ENCODE measurements at regions of chr1 and their contacts with region 1.

Region 1: GRCh38 chr1:226083302-226084101 is 21.0 kb downstream of the H3-3A start:
- DNase-seq: peak; percentile 97
- H3K4me3 Mint-ChIP-seq: peak overlapping the region; percentile 81
- H3K27ac Mint-ChIP-seq: peak overlapping the region; percentile 58
- H3K4me1 Mint-ChIP-seq: peaks cover 6% of the 10 kb centered on the region
- H3K27me3 Mint-ChIP-seq: no peaks in the 10 kb centered on the region
- CTCF ChIP-seq: no peak

Region 2: DNA sequence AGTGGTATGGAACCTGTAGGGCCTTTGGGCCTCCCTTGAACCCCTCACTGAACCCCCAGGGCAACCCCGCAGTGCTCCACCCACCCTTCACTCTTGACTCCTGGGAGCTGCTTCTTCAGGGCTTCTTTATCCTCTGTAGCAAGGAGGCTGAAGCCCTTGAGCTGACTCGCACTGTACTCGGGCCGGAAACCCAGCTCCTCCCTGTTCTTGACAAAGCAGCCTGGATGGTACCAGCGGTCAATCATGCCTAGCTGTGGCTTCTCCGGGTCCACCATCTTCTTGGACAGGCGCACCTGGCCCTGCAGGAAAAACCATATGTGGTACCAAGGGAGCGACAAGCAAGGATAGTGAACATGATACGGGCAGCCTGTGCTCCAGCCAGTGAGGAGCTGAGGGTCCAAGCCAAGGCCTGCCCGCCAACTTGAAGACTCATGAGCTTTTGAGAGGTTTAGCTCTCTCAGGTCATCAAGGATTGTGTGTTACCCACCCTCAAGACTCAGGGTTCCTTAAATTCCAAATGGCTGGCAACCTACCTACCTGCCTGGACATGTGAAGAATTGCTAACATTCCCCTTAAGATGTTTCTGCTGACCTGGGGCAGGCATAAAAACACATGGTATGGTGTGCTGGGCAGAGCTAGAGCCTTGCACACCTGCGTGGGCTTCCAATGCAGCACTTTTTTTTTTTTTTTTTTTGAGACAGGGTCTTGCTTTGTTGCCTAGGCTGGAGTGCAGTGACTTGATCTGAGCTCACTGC is 307.0 kb after region 1 on chr1:
- CTCF ChIA-PET with region 1: no interaction called
- intact Hi-C with region 1: no loop called
- DNase-seq: no peak
- H3K4me3 Mint-ChIP-seq: no peak overlapping the region
- H3K27ac Mint-ChIP-seq: no peak overlapping the region
- H3K4me1 Mint-ChIP-seq: no peaks in the 10 kb centered on the region
- H3K27me3 Mint-ChIP-seq: no peaks in the 10 kb centered on the region
- CTCF ChIP-seq: no peak

Region 3: DNA sequence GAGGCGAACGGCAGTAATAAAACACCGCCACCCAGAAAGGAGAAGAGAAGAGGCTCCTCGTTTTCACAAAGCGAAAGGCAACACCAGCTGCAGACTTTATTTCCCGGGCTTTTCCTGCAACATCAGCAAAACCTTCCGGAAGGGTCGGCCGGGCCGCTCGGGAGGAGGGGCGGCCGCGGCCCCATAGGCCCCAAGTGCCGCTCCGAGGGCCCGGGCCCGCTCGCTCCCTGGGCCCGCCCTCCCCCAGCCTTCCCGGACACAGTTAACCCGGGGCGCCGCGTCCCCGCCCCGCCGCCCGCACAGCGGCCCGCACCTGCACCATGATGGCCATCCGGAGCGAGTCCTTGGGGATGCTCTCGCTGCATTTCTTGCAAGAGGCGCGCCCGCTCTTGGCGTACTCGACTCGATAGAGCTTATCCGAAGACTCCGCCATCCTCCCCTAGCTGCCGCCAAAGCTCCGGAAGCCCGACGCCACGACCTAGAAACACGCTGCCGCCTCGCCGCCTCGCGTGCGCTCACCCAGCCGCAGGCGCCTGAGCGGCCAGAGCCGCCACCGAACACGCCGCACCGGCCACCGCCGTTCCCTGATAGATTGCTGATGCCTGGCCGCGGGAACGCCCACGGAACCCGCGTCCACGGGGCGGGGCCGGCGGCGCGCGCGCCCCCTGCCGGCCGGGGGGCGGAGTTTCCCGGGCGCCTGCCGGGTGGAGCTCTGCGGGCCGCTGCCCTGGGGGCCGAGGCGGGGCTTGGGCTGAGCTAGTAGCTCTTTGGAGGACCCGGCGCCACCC is 324.2 kb after region 1 on chr1 and contains the start of gene PARP1:
- CTCF ChIA-PET with region 1: interaction called, 13 read pairs
- intact Hi-C with region 1: no loop called
- DNase-seq: peak; percentile 95
- H3K4me3 Mint-ChIP-seq: peak within 1 kb of the TSS; percentile 96
- H3K27ac Mint-ChIP-seq: peak within 1 kb of the TSS; percentile 24
- H3K4me1 Mint-ChIP-seq: peaks cover 29% of the 10 kb centered on the region
- H3K27me3 Mint-ChIP-seq: peaks cover 24% of the 10 kb centered on the region
- CTCF ChIP-seq: peak; percentile 85
- total RNA-seq, gene PARP1: 123 and 136 TPM in 2 replicates

Measured in Calu3 (cell line).